BJ (cell line): ENCODE measurements at regions of chr20 and their contacts with region 1.

Region 1: DNA sequence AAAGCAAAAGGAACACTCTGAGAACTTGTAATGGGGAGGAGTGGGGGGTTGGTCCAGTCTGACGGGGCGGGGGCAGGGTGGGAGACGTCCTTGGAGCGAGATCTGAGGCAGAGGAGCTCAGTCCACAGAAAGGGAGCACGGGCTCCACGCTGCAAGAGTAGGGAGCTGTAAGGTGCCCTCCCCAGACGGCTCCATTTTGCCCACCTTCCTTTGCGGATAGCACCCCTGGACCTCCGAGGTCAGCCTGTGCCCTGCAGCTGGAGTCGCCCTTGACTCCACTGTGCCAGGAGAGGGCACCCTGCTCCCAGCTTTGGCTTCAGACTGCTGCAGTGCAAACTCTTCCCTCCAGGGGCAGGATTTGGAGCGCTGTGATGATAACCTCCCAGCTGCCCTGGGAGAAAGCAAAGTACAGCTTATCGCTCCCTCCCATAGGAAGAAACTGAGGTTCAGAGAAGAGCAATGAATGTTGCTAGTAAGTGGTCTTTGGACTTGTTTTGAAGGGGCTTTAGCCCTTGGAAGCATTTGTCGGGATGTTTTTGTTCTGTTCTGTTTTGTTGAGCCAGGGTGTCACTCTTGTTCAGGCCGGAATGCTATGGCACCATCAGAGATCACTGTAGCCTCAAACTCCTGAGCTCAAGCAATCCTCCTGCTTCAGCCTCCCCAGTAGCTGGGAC is 9.5 kb upstream of the AHCY start:
- DNase-seq: no peak
- H3K4me3 ChIP-seq: peak overlapping the region; percentile 3; the same call in 1 of the 2 replicates
- H3K27me3 ChIP-seq: no peaks in the 10 kb centered on the region
- CTCF ChIP-seq: peak; percentile 100

Region 2: GRCh38 chr20:34427331-34427730 is 114.7 kb after region 1 on chr20:
- CTCF ChIA-PET with region 1: interaction called, 10 read pairs
- POLR2A ChIA-PET with region 1: no interaction called
- DNase-seq: no peak
- H3K4me3 ChIP-seq: no peak overlapping the region
- H3K27me3 ChIP-seq: no peaks in the 10 kb centered on the region
- CTCF ChIP-seq: no peak

Region 3: DNA sequence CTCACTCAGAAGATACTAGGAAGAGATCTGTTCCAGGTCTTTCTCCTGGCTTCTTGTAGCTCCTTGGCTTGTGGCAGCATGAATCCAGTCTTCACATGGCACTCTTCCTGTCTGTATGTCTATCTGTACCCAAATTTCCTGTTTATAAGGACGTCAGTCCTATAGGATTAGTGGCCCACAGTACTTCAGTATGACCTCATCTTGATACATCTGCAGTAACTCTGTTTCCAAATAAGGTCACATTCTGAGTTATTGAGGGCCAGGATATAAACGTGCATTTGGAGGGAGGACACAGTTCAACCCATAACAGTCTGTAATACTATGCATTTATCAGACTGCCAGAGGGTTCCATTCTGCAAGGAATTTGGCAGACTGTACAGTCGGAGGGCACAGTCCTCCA is 145.9 kb after region 1 on chr20:
- CTCF ChIA-PET with region 1: interaction called, 13 read pairs
- POLR2A ChIA-PET with region 1: no interaction called
- DNase-seq: no peak
- H3K4me3 ChIP-seq: no peak overlapping the region
- H3K27me3 ChIP-seq: no peaks in the 10 kb centered on the region
- CTCF ChIP-seq: no peak

Region 4: GRCh38 chr20:34493646-34494045 is 181.0 kb after region 1 on chr20:
- CTCF ChIA-PET with region 1: interaction called, 28 read pairs
- POLR2A ChIA-PET with region 1: no interaction called
- DNase-seq: no peak
- H3K4me3 ChIP-seq: no peak overlapping the region
- H3K27me3 ChIP-seq: no peaks in the 10 kb centered on the region
- CTCF ChIP-seq: no peak

Region 5: DNA sequence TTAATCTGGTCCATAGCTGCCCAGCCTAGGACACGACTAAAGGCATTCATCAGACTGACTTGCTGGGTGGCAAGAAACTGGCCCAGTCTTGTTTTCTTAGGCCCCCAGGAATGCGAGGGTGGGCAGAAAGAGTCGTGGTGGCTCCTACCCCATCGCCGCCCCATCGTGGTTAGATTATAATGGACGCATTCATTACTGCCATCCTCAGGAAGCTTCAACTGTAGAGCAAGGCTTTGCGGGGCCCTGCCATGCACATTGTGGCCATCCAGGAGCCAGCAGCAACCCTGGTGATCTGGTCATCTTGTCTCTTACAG is 219.7 kb after region 1 on chr20:
- CTCF ChIA-PET with region 1: interaction called, 12 read pairs
- POLR2A ChIA-PET with region 1: no interaction called
- DNase-seq: no peak
- H3K4me3 ChIP-seq: no peak overlapping the region
- H3K27me3 ChIP-seq: no peaks in the 10 kb centered on the region
- CTCF ChIP-seq: no peak